B cell (primary cell): ENCODE measurements at regions of chr1 and their contacts with region 1.

Region 1: GRCh38 chr1:45686317-45687013 is at the start of gene GPBP1L1:
- DNase-seq: peak; percentile 99
- ATAC-seq: peak; percentile 72
- H3K4me3 ChIP-seq: peak within 1 kb of the TSS; percentile 65 to 99 (median 96)
- H3K4me3 Mint-ChIP-seq: peak within 1 kb of the TSS; percentile 100
- H3K27ac ChIP-seq: peak within 1 kb of the TSS; percentile 98
- H3K27ac Mint-ChIP-seq: peak within 1 kb of the TSS; percentile 100
- H3K4me1 ChIP-seq: peaks cover 23 to 30% of the 10 kb centered on the region in 2 donors
- H3K4me1 Mint-ChIP-seq: peaks cover 54% of the 10 kb centered on the region
- H3K27me3 ChIP-seq: no peaks in the 10 kb centered on the region
- H3K27me3 Mint-ChIP-seq: no peaks in the 10 kb centered on the region
- CTCF ChIP-seq: no peak
- total RNA-seq, gene GPBP1L1: 137 and 167 TPM in 2 replicates

Region 2: DNA sequence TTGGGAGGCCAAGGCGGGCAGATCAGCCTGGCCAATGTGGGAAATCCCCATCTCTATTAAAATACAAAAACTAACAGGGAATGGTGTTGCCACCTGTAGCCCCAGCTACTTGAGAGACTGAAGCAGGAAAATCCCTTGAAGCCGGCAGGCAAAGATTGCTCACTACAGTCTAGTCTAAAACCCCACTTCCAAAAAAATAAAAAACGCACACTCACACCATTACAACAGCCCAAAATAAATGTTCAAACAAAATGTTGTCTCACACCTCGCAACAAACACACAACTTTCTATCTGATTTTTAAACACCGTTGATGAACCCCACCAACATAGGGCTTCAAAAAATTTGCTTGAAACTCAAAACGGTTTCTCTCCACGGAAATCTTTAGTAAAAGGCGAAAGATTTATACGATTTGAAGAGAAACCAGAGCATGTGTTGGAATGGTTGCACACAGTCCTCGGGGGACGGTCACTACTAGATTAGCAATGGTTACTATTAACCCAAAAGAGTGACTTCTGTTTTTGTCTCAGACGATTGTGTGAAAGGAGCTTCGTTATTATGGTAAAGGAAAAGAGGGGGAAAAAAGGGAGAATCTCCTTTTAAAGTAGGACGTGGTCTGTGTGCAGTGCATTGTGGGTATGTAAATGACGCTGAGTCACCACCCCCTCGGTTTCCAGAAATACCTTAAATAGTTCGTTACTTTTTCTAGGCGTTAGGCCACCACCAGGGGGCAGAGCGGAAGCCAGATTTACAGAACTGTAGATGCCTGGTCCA is 955.5 kb before region 1 on chr1 and contains the start of gene RNU5D-1:
- CTCF ChIA-PET with region 1: no interaction called
- POLR2A ChIA-PET with region 1: no interaction called
- intact Hi-C with region 1: loop called (anchors 10 kb)
- DNase-seq: peak; percentile 97
- ATAC-seq: peak; percentile 74
- H3K4me3 ChIP-seq: peak within 1 kb of the TSS; percentile 17 to 68 (median 50)
- H3K4me3 Mint-ChIP-seq: peak within 1 kb of the TSS; percentile 92
- H3K27ac ChIP-seq: peak within 1 kb of the TSS; percentile 93 to 96
- H3K27ac Mint-ChIP-seq: peak within 1 kb of the TSS; percentile 100
- H3K4me1 ChIP-seq: peaks cover 12 to 24% of the 10 kb centered on the region in 2 donors
- H3K4me1 Mint-ChIP-seq: peaks cover 24% of the 10 kb centered on the region
- H3K27me3 ChIP-seq: no peaks in the 10 kb centered on the region
- H3K27me3 Mint-ChIP-seq: no peaks in the 10 kb centered on the region
- CTCF ChIP-seq: peak; percentile 87
- total RNA-seq, gene RNU5D-1: not detected in 2 replicates

Region 3: DNA sequence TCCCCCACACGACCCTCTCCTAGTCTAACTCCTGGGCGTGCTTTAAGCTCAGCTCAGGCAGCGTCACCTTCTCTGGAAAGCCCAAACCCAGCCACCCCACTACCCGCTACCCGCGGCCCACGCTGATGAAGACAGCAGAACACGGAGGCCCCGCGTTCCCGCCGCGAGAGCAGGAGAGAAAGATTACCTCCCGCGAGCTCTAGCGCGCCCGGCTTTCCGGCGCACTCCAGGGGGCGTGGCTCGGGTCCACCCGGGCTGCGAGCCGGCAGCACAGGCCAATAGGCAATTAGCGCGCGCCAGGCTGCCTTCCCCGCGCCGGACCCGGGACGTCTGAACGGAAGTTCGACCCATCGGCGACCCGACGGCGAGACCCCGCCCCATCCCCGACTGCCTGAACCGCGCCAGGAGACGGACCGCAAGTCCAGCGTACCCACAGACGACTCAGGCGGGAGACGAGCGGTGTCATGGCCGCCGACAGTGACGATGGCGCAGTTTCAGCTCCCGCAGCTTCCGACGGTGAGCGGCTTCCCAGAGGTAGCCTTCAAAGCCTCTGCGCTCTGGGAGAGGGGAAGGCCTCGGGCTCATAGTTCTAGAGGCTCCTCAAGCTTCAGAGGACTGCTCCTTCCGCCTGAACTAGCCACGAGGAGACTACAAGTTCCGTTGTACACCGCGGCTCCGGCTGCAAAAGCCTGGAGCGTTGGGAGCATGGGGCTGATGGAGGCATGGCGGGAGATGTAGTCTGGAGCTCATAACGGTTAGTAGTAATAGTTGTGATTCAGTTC is 346.5 kb before region 1 on chr1 and contains the starts of genes MUTYH and TOE1:
- CTCF ChIA-PET with region 1: no interaction called
- POLR2A ChIA-PET with region 1: no interaction called
- intact Hi-C with region 1: loop called (anchors 1 kb)
- DNase-seq: peak; percentile 92
- ATAC-seq: peak; percentile 88
- H3K4me3 ChIP-seq: peak within 1 kb of the TSS; percentile 83 to 97 (median 86)
- H3K4me3 Mint-ChIP-seq: peak within 1 kb of the TSS; percentile 91
- H3K27ac ChIP-seq: peak within 1 kb of the TSS; percentile 96
- H3K27ac Mint-ChIP-seq: peak within 1 kb of the TSS; percentile 100
- H3K4me1 ChIP-seq: peaks cover 20 to 33% of the 10 kb centered on the region in 2 donors
- H3K4me1 Mint-ChIP-seq: peaks cover 38% of the 10 kb centered on the region
- H3K27me3 ChIP-seq: no peaks in the 10 kb centered on the region
- H3K27me3 Mint-ChIP-seq: no peaks in the 10 kb centered on the region
- CTCF ChIP-seq: no peak
- total RNA-seq, gene MUTYH: 68.1 and 68.5 TPM in 2 replicates
- total RNA-seq, gene TOE1: 21.9 and 24.7 TPM in 2 replicates

Region 4: GRCh38 chr1:45750298-45751038 is 64.0 kb after region 1 on chr1 and contains the start of gene IPP:
- CTCF ChIA-PET with region 1: interaction called, 5 read pairs
- POLR2A ChIA-PET with region 1: interaction called, 4 read pairs
- intact Hi-C with region 1: loop called (anchors 1 kb)
- DNase-seq: peak; percentile 96
- ATAC-seq: peak; percentile 94
- H3K4me3 ChIP-seq: peak within 1 kb of the TSS; percentile 70 to 82 (median 75)
- H3K4me3 Mint-ChIP-seq: peak within 1 kb of the TSS; percentile 99
- H3K27ac ChIP-seq: peak within 1 kb of the TSS; percentile 94 to 98
- H3K27ac Mint-ChIP-seq: peak within 1 kb of the TSS; percentile 100
- H3K4me1 ChIP-seq: peaks cover 8 to 18% of the 10 kb centered on the region in 2 donors
- H3K4me1 Mint-ChIP-seq: peaks cover 15% of the 10 kb centered on the region
- H3K27me3 ChIP-seq: no peaks in the 10 kb centered on the region
- H3K27me3 Mint-ChIP-seq: no peaks in the 10 kb centered on the region
- CTCF ChIP-seq: no peak
- total RNA-seq, gene IPP: 12.1 and 12.7 TPM in 2 replicates

Region 5: GRCh38 chr1:46197964-46198811 is 511.7 kb after region 1 on chr1 and contains the start of gene POMGNT1:
- CTCF ChIA-PET with region 1: no interaction called
- POLR2A ChIA-PET with region 1: no interaction called
- intact Hi-C with region 1: loop called (anchors 5 kb)
- DNase-seq: peak; percentile 81
- ATAC-seq: peak; percentile 98
- H3K4me3 ChIP-seq: peak within 1 kb of the TSS; percentile 74 to 80 (median 77)
- H3K4me3 Mint-ChIP-seq: peak within 1 kb of the TSS; percentile 88
- H3K27ac ChIP-seq: peak within 1 kb of the TSS; percentile 34 to 66
- H3K27ac Mint-ChIP-seq: peak within 1 kb of the TSS; percentile 70
- H3K4me1 ChIP-seq: peaks cover 19 to 28% of the 10 kb centered on the region in 2 donors
- H3K4me1 Mint-ChIP-seq: peaks cover 26% of the 10 kb centered on the region
- H3K27me3 ChIP-seq: peaks cover 0 to 9% (median 4%) of the 10 kb centered on the region in 4 experiments
- H3K27me3 Mint-ChIP-seq: peaks cover 6% of the 10 kb centered on the region
- CTCF ChIP-seq: no peak
- total RNA-seq, gene POMGNT1: 50.8 and 51.0 TPM in 2 replicates